Astrocyte of the spinal cord (primary cell): ENCODE measurements at regions of chr1 and their contacts with region 1.

Region 1: GRCh38 chr1:3530926-3531818 is 76.7 kb downstream of the ARHGEF16 start:
- DNase-seq: peak; percentile 33
- H3K4me3 ChIP-seq: peak overlapping the region; percentile 36
- CTCF ChIP-seq: no peak

Region 2: DNA sequence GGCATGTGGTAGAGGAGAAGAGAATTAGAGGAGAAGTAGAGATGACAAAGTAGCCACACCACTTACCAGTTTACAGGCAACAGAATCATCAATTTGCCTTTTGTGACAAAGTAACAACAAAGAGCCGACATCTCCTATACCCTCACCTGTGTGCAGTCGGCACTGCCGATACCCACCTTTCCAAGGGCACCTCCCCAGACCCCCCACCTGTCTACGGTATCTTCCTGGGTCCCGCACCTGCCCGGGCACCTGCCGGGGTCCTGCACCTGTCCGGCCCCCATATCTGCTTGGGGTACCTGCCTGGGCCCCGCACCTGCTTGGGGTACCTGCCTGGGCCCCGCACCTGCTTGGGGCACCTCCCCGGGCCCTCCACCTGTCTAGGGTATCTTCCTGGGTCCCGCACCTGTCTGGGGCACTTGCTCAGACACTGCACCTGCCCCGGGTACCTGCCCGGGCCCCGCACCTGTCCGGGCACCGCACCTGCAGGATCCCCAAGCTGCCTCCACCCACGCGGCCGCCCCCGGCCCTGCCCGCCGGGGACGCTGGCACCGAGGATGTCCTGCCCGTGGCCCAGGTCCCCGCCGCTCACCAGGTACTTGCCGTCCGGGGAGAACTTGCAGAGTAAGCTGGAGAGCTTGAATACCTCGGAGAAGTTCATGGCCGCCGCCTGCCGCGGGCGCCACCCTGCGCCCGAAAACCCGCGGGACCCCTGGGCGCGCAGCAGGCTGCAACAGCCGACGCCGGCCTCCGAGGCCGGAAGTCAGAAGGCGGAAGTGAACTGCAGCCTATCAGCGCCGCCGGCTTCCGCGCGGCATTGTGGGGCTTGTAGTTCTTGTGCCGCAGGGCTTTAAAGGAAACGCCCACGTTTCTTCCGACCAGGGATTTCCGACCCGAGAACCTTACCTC is 118.4 kb after region 1 on chr1 and contains the start of gene WRAP73:
- in situ Hi-C with region 1: loop called (anchors 25 kb)
- DNase-seq: peak; percentile 92
- H3K4me3 ChIP-seq: peak within 1 kb of the TSS; percentile 76
- CTCF ChIP-seq: no peak